Psoas muscle (tissue), 8 donors: ENCODE measurements at regions of chr9 and their contacts with region 1.

Region 1: DNA sequence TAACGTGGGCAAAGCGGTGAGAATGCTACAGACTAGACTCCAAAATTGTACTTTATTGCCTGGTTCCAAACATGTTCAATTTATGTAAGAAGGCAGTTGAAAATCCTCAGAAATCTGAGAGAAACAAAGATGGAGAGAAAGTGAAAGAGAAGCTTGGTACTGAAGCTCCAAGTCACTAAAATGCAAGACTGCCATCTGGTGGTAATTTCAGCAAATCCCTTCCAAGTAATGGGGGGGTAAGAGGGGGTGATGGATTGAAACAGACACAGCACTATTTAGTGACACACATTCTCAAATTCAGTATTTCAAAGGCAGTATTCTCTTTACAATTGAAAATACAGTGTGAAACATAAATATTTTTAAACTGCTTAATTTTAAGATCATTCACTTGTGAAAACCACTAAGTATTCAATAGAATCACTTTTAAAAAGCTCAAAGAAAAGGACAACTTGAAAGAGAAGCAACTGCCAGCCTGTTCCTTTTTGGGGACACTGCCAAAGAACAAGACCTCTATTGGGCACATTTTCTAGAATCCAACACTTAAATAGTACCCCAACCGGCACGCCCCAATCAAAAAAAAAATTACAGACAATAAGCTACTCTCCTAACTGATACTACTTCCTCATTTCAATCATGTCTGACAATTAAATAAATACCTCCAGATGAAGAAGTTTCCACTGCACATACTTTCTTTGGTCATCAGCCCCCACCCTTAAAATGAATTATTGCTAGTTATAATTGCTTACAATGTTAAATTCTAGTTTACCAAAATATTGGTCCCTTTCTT is 131.5 kb downstream of the AGTPBP1 start:
- DNase-seq: no peak
- ATAC-seq: peak; percentile 46 to 92 (median 73)
- H3K4me3 ChIP-seq: peak overlapping the region; percentile 37
- H3K27ac ChIP-seq: no peak overlapping the region
- H3K4me1 ChIP-seq: no peaks in the 10 kb centered on the region
- H3K27me3 ChIP-seq: no peaks in the 10 kb centered on the region
- CTCF ChIP-seq: peak; percentile 71

Region 2: GRCh38 chr9:84397151-84397728 is 1213.0 kb before region 1 on chr9:
- intact Hi-C with region 1: loop called (anchors 1 to 5 kb)
- DNase-seq: peak; percentile 40 to 70
- ATAC-seq: peak; percentile 72 to 84 (median 78)
- H3K4me3 ChIP-seq: no peak overlapping the region
- H3K27ac ChIP-seq: no peak overlapping the region
- H3K4me1 ChIP-seq: no peaks in the 10 kb centered on the region
- H3K27me3 ChIP-seq: peaks cover 0 to 2% (median 0%) of the 10 kb centered on the region in 3 donors
- CTCF ChIP-seq: peak; percentile 96

Region 3: GRCh38 chr9:85508616-85509015 is 101.7 kb before region 1 on chr9:
- intact Hi-C with region 1: loop called in 1 of 2 experiments (anchors 5 kb)
- DNase-seq: no peak
- ATAC-seq: no peak
- H3K4me3 ChIP-seq: no peak overlapping the region
- H3K27ac ChIP-seq: no peak overlapping the region
- H3K4me1 ChIP-seq: no peaks in the 10 kb centered on the region
- H3K27me3 ChIP-seq: peaks cover 0 to 3% (median 0%) of the 10 kb centered on the region in 3 donors
- CTCF ChIP-seq: peak; percentile 10